ENCODE measurements at regions of chr5 and their contacts with region 1.

Region 1: GRCh38 chr5:52943285-52943684 is 45.9 kb upstream of the ITGA2 start:
- DNase-seq: no peak
- H3K4me3 Mint-ChIP-seq: no peak overlapping the region
- H3K27ac Mint-ChIP-seq: no peak overlapping the region
- H3K4me1 Mint-ChIP-seq: peaks cover 5% of the 10 kb centered on the region
- H3K27me3 Mint-ChIP-seq: no peaks in the 10 kb centered on the region

Region 2: DNA sequence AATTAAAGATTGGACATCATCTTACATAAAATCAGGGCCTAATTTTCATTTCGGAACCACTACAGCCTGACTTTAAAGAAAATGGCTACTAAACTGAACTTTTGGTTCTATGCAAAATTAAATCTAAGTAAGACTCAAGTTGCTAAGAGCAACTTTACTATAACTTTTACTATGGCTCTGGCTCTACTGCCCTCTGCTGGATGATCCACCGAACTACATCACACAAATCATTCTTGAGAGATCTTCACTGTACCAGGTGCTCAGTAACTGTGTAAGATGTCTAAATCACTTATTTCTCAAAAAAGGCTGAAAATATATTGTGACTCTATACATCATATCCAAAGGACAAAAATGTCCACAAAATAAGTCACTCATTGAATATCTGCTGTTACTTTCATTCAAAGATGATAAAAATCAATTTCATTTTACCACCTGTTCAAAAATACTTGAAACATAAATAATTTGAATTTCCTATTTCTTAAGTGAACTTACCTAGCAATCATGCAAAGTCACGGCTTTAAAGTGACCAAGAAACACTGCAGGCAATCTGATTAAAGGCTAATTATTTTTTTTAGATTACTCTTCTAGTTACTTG is 152.7 kb after region 1 on chr5:
- CTCF ChIA-PET with region 1: interaction called, 194 read pairs
- POLR2A ChIA-PET with region 1: interaction called, 4 read pairs
- intact Hi-C with region 1: loop called (anchors 1 kb)
- DNase-seq: peak; percentile 78
- H3K4me3 Mint-ChIP-seq: no peak overlapping the region
- H3K27ac Mint-ChIP-seq: no peak overlapping the region
- H3K4me1 Mint-ChIP-seq: no peaks in the 10 kb centered on the region
- H3K27me3 Mint-ChIP-seq: no peaks in the 10 kb centered on the region